ENCODE measurements at regions of chr12 and their contacts with region 1.

Region 1: DNA sequence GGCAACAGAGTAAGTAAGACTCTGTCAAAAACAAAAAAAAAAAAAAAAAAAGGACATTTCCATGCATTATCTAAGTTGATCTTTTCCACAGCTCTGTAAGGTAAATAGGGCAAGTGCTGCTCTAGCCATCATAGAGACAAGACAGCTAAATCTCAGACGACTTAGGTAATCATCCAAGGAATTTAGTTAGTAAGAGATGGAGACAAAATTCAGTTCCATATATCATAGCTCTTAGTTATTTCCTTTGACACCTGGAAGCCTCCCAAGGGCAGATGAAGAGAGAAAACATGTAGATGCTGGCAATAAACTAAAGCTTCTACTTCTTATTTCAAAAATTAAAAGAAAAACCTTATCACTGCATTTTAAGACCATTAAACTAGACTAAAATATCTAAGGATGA is 48.7 kb downstream of the ST8SIA1 start:
- DNase-seq: no peak
- ATAC-seq: no peak
- H3K4me3 ChIP-seq: no peak overlapping the region
- H3K4me3 Mint-ChIP-seq: no peak overlapping the region
- H3K27ac ChIP-seq: no peak overlapping the region
- H3K27ac Mint-ChIP-seq: no peak overlapping the region
- H3K4me1 ChIP-seq: peaks cover 3 to 12% of the 10 kb centered on the region in 2 experiments
- H3K4me1 Mint-ChIP-seq: peaks cover 22 to 30% (median 27%) of the 10 kb centered on the region in 3 donors
- H3K27me3 ChIP-seq: no peaks in the 10 kb centered on the region
- H3K27me3 Mint-ChIP-seq: no peaks in the 10 kb centered on the region

Region 2: DNA sequence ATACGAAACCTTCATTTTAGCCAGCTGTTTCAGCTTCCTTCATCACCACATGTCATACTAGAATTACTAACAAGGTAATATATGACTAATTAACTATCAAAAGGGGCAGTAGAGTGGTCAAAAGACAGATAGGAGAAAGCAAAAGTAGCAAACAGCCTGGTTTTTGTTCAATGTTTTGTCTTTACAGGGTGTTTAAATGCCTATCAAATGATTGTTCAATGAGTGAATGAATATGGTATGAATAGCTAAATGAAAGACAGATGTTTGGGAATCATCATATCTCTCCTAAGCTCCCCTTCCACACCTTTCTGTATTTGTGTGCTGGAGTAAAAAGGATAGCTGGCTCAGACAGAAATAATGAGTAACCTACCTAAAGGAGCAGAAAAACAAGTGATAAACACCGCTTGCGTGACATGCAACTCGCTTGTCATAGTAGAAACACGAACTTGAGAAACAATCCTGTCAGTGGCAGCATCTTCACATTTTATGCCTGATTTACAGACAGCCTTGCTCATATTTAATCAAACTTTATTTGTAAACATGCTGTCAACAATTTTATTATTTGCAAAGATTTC is 378.8 kb before region 1 on chr12:
- CTCF ChIA-PET with region 1: no interaction called
- POLR2A ChIA-PET with region 1: interaction called in 1 of 2 experiments, 10 read pairs
- DNase-seq: no peak
- ATAC-seq: no peak
- H3K4me3 ChIP-seq: no peak overlapping the region
- H3K4me3 Mint-ChIP-seq: no peak overlapping the region
- H3K27ac ChIP-seq: no peak overlapping the region
- H3K27ac Mint-ChIP-seq: no peak overlapping the region
- H3K4me1 ChIP-seq: no peaks in the 10 kb centered on the region
- H3K4me1 Mint-ChIP-seq: no peaks in the 10 kb centered on the region
- H3K27me3 ChIP-seq: no peaks in the 10 kb centered on the region
- H3K27me3 Mint-ChIP-seq: peaks cover 0 to 9% of the 10 kb centered on the region in 2 donors

Measured in T-cell (primary cell).